MCF 10A (cell line): ENCODE measurements at regions of chr1 and their contacts with region 1.

Region 1: DNA sequence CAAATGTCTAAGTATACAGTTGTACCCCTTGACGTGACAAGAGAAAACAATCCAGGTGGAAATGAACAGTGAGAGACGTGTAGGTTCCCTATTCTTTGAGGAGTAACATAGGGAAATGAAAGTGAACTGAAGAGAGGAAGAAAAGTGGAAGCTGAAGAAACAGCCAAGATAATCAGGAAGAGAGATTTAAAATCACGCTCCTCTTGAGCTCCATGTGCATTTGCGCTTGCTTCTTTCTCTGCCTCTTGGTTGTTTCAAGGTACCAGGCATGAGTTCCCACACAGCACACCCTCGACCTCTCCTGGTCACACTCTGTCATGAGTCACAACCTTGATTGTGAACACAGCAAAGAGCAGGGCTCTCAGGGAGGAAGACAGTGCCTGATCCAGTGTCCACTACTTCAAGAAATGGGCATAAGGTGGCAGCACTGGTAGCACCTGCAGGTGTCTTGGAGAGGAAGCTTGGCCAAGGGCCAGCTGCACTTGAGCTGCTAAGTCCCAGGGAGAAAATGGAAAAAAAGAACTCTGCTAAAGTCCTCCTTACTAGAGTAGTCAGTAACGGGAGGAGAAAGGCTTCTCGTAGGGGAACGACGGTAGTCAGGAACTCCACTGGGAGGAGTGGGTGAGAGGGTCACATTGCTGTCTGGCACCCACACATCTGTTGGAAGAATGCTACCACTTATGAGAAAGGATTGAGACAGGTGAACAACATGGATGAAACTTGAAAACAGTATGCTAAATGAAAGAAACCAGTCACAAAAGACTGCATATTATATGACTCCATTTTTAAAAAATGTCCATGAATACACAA is 18.3 kb upstream of the ARID1A start:
- DNase-seq: peak; percentile 97
- H3K4me3 Mint-ChIP-seq: no peak overlapping the region
- H3K27ac Mint-ChIP-seq: no peak overlapping the region
- H3K4me1 Mint-ChIP-seq: peaks cover 16% of the 10 kb centered on the region
- H3K27me3 Mint-ChIP-seq: no peaks in the 10 kb centered on the region
- CTCF ChIP-seq: peak; percentile 66

Region 2: DNA sequence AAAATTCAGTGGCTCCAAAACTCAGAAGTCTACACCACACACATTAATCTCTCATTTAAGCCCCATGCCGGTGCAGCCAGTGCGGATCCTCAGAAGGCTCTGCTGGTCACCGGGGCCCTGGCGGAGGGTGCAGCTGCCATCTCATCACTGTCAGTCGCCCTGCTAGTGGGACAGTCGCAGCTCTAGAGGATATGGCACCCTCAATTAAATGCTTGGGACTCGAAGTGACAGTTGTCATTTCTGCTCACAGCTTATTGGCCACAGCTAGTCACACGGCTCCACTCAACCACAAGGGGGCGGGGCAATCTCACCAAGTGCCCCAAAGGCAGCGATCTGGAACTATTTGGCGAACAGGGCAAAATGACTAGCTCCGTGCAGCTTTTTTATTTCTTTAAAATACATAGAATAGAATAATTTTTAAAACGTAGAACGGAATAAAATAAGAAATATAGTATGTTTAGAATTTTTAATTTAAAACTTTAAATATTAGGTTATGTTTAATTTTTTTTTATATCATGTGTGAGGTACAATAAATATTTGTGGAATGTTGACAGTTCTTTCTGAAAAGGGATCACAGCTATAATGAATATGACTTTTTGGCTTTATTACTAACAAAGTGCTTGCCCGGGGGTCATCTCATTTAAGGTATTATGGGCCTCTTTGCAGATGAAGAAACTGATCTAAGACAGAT is 1068.9 kb before region 1 on chr1:
- CTCF ChIA-PET with region 1: no interaction called
- POLR2A ChIA-PET with region 1: no interaction called
- intact Hi-C with region 1: no loop called
- DNase-seq: peak; percentile 81
- H3K4me3 Mint-ChIP-seq: no peak overlapping the region
- H3K27ac Mint-ChIP-seq: no peak overlapping the region
- H3K4me1 Mint-ChIP-seq: no peaks in the 10 kb centered on the region
- H3K27me3 Mint-ChIP-seq: peaks cover 59% of the 10 kb centered on the region
- CTCF ChIP-seq: peak; percentile 35

Region 3: GRCh38 chr1:26602378-26602959 is 75.0 kb before region 1 on chr1:
- CTCF ChIA-PET with region 1: interaction called, 50 read pairs
- POLR2A ChIA-PET with region 1: interaction called, 13 read pairs
- intact Hi-C with region 1: loop called (anchors 1 kb)
- DNase-seq: peak; percentile 77
- H3K4me3 Mint-ChIP-seq: no peak overlapping the region
- H3K27ac Mint-ChIP-seq: no peak overlapping the region
- H3K4me1 Mint-ChIP-seq: no peaks in the 10 kb centered on the region
- H3K27me3 Mint-ChIP-seq: peaks cover 28% of the 10 kb centered on the region
- CTCF ChIP-seq: peak; percentile 77

Region 4: GRCh38 chr1:26666855-26667254 is 10.7 kb before region 1 on chr1:
- CTCF ChIA-PET with region 1: interaction called, 26 read pairs
- POLR2A ChIA-PET with region 1: interaction called, 8 read pairs
- intact Hi-C with region 1: no loop called
- DNase-seq: peak; percentile 71
- H3K4me3 Mint-ChIP-seq: no peak overlapping the region
- H3K27ac Mint-ChIP-seq: no peak overlapping the region
- H3K4me1 Mint-ChIP-seq: peaks cover 7% of the 10 kb centered on the region
- H3K27me3 Mint-ChIP-seq: no peaks in the 10 kb centered on the region
- CTCF ChIP-seq: no peak

Region 5: GRCh38 chr1:26717017-26717491 is 39.5 kb after region 1 on chr1:
- CTCF ChIA-PET with region 1: interaction called, 3 read pairs
- POLR2A ChIA-PET with region 1: interaction called, 3 read pairs
- intact Hi-C with region 1: loop called (anchors 1 kb)
- DNase-seq: peak; percentile 45
- H3K4me3 Mint-ChIP-seq: no peak overlapping the region
- H3K27ac Mint-ChIP-seq: peak overlapping the region; percentile 67
- H3K4me1 Mint-ChIP-seq: peaks cover 8% of the 10 kb centered on the region
- H3K27me3 Mint-ChIP-seq: no peaks in the 10 kb centered on the region
- CTCF ChIP-seq: no peak

Region 6: GRCh38 chr1:26794391-26794790 is 116.9 kb after region 1 on chr1:
- CTCF ChIA-PET with region 1: interaction called, 63 read pairs
- POLR2A ChIA-PET with region 1: interaction called, 31 read pairs
- intact Hi-C with region 1: loop called (anchors 1 kb)
- DNase-seq: no peak
- H3K4me3 Mint-ChIP-seq: no peak overlapping the region
- H3K27ac Mint-ChIP-seq: no peak overlapping the region
- H3K4me1 Mint-ChIP-seq: peaks cover 2% of the 10 kb centered on the region
- H3K27me3 Mint-ChIP-seq: no peaks in the 10 kb centered on the region
- CTCF ChIP-seq: no peak